ENCODE measurements at regions of chr1 and their contacts with region 1.

Region 1: GRCh38 chr1:84944767-84945486 is 51.9 kb upstream of the LPAR3 start:
- DNase-seq: peak; percentile 61 to 79
- H3K4me3 ChIP-seq: peak overlapping the region; percentile 47; the same call in 1 of the 2 replicates
- H3K27ac ChIP-seq: 0 out of 2 replicates have a peak overlapping the region, but pooled peaks have one; percentile 17
- H3K4me1 ChIP-seq: peaks cover 10% of the 10 kb centered on the region; the same call in 1 of the 2 replicates
- H3K27me3 ChIP-seq: no peaks in the 10 kb centered on the region
- CTCF ChIP-seq: peak; percentile 96

Region 2: GRCh38 chr1:84996846-84997666 is 52.1 kb after region 1 on chr1 and contains the start of gene MCOLN2:
- CTCF ChIA-PET with region 1: no interaction called
- POLR2A ChIA-PET with region 1: no interaction called
- intact Hi-C with region 1: no loop called
- DNase-seq: peak in 1 of 2 experiments; percentile 19
- H3K4me3 ChIP-seq: peak within 1 kb of the TSS; percentile 91
- H3K27ac ChIP-seq: no peak within 1 kb of the TSS
- H3K4me1 ChIP-seq: peaks cover 5% of the 10 kb centered on the region; the same call in 1 of the 2 replicates
- H3K27me3 ChIP-seq: peaks cover 21% of the 10 kb centered on the region
- CTCF ChIP-seq: no peak; the same call in 1 of the 2 replicates
- total RNA-seq, gene MCOLN2: 0.23 TPM in 1 of 2 replicates, not detected in the other

Region 3: GRCh38 chr1:85048296-85049064 is 103.6 kb after region 1 on chr1 and contains the start of gene MCOLN3:
- CTCF ChIA-PET with region 1: interaction called, 3 read pairs
- POLR2A ChIA-PET with region 1: no interaction called
- intact Hi-C with region 1: loop called (anchors 10 kb)
- DNase-seq: peak; percentile 57 to 62
- H3K4me3 ChIP-seq: peak within 1 kb of the TSS; percentile 81
- H3K27ac ChIP-seq: no peak within 1 kb of the TSS
- H3K4me1 ChIP-seq: 0 out of 2 replicates have a peak, but pooled peaks cover 3% of the 10 kb centered on the region
- H3K27me3 ChIP-seq: no peaks in the 10 kb centered on the region
- CTCF ChIP-seq: 0 out of 2 replicates have a peak, but pooled peaks have one; percentile 10
- total RNA-seq, gene MCOLN3: 8.4 and 10.1 TPM in 2 replicates

Region 4: DNA sequence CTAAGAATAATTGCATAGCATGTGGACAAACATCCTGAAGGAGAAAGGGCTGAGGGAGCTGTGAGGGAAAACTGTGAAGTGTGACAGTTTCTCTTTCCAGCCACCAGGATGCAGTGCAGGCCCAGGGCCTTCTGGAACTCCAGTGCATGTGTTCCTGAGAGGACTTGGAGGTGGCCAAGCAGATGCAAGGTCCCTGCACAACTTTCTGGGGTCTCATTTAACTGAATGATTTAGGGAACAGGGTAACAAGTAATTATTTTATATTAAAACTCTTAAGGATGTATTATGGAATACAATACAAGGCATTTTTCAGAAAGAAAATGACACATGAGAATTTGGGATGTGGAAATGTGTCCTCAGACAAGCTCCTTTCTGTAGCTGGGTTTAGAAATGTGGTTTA is 164.5 kb after region 1 on chr1:
- CTCF ChIA-PET with region 1: interaction called, 11 read pairs
- POLR2A ChIA-PET with region 1: no interaction called
- intact Hi-C with region 1: loop called (anchors 1 kb)
- DNase-seq: peak; percentile 40 to 62
- H3K4me3 ChIP-seq: no peak overlapping the region
- H3K27ac ChIP-seq: no peak overlapping the region
- H3K4me1 ChIP-seq: no peaks in the 10 kb centered on the region
- H3K27me3 ChIP-seq: no peaks in the 10 kb centered on the region
- CTCF ChIP-seq: peak; percentile 91